Panc1 (cell line): ENCODE measurements at regions of chr9 and their contacts with region 1.

Region 1: DNA sequence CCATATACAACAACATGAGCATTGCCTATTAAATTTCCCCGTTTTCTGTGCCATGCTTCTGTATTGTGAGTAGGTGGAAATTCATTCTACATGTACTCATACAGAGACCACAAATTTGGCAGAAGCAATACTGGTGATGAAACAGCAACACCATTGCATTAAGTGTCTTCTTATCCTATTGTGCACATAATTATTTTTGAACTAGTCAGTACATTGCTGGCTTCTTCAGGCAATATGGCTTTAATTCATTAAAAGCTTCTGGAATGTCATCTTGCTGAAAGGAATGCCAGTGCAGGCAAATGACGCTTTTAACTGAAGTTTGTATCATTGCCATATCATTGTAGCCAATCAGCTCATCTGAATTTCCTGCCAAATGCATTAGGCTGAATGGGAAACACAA is 82.6 kb downstream of the KIAA1958 start:
- DNase-seq: no peak
- ATAC-seq: no peak
- H3K4me3 ChIP-seq: no peak overlapping the region
- H3K27ac ChIP-seq: no peak overlapping the region
- H3K4me1 ChIP-seq: no peaks in the 10 kb centered on the region
- H3K27me3 ChIP-seq: no peaks in the 10 kb centered on the region
- CTCF ChIP-seq: no peak

Region 2: DNA sequence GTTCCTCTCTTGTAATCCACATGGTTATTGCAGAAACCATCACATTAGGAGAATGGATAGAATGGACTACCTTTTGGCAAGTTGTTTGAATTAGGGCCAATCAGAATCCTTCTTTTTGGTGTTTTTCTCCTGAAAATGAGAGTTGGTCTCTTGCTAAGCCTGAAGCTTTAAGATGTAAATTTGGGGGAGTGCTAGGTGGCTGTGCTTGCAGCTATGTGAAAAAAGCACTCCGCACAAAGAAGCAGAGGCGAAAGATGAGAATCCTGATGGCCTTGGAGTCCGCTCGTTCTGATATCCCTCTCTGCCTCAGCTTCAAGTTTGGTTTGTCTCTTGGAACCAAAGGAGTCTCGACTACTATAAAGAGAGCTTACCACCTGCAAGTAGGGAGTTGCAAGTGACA is 85.1 kb after region 1 on chr9:
- CTCF ChIA-PET with region 1: no interaction called
- POLR2A ChIA-PET with region 1: interaction called, 11 read pairs
- in situ Hi-C with region 1: no loop called
- intact Hi-C with region 1: no loop called
- DNase-seq: no peak
- ATAC-seq: no peak
- H3K4me3 ChIP-seq: no peak overlapping the region
- H3K27ac ChIP-seq: no peak overlapping the region
- H3K4me1 ChIP-seq: no peaks in the 10 kb centered on the region
- H3K27me3 ChIP-seq: no peaks in the 10 kb centered on the region
- CTCF ChIP-seq: no peak

Region 3: DNA sequence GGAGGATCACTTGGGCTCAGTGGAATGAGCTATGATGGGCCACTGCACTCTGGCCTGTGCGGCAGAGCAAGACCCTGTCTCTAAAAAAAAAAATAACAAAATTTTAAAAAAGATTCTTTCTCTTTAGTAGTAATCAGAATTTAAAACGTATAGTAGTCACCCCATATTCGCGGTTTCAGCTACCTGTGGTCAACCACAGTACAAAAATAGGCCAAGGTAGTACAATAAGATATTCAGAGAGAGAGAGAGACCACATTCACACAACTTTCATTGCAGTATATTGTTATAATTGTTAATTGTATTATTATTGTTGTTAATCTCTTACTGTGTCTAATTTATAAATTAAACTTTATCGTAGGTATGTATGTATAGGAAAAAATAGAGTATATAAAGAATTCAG is 130.0 kb after region 1 on chr9:
- CTCF ChIA-PET with region 1: no interaction called
- POLR2A ChIA-PET with region 1: no interaction called
- in situ Hi-C with region 1: no loop called
- intact Hi-C with region 1: no loop called
- DNase-seq: no peak
- ATAC-seq: no peak
- H3K4me3 ChIP-seq: no peak overlapping the region
- H3K27ac ChIP-seq: no peak overlapping the region
- H3K4me1 ChIP-seq: no peaks in the 10 kb centered on the region
- H3K27me3 ChIP-seq: no peaks in the 10 kb centered on the region
- CTCF ChIP-seq: no peak